Vagina (tissue), 2 donors: ENCODE measurements at regions of chr13 and their contacts with region 1.

Region 1: GRCh38 chr13:39119422-39119821 is 81.2 kb downstream of the NHLRC3 start:
- DNase-seq: no peak
- H3K4me3 ChIP-seq: no peak overlapping the region
- H3K27ac ChIP-seq: no peak overlapping the region
- H3K4me1 ChIP-seq: no peaks in the 10 kb centered on the region
- H3K27me3 ChIP-seq: no peaks in the 10 kb centered on the region
- CTCF ChIP-seq: no peak
- POLR2A ChIP-seq: no peak

Region 2: GRCh38 chr13:39185326-39185725 is 65.9 kb after region 1 on chr13:
- intact Hi-C with region 1: no loop called
- DNase-seq: no peak
- H3K4me3 ChIP-seq: no peak overlapping the region
- H3K27ac ChIP-seq: peak overlapping the region; percentile 28
- H3K4me1 ChIP-seq: peaks cover 31% of the 10 kb centered on the region
- H3K27me3 ChIP-seq: no peaks in the 10 kb centered on the region
- CTCF ChIP-seq: no peak
- POLR2A ChIP-seq: no peak

Region 3: GRCh38 chr13:39347926-39348901 is 228.8 kb after region 1 on chr13:
- intact Hi-C with region 1: no loop called
- DNase-seq: no peak
- H3K4me3 ChIP-seq: no peak overlapping the region
- H3K27ac ChIP-seq: no peak overlapping the region
- H3K4me1 ChIP-seq: peaks cover 16% of the 10 kb centered on the region
- H3K27me3 ChIP-seq: no peaks in the 10 kb centered on the region
- CTCF ChIP-seq: no peak
- POLR2A ChIP-seq: no peak

Region 4: GRCh38 chr13:40158218-40158617 is 1038.8 kb after region 1 on chr13:
- intact Hi-C with region 1: loop called (anchors 5 kb)
- DNase-seq: no peak
- H3K4me3 ChIP-seq: no peak overlapping the region
- H3K27ac ChIP-seq: no peak overlapping the region
- H3K4me1 ChIP-seq: no peaks in the 10 kb centered on the region
- H3K27me3 ChIP-seq: no peaks in the 10 kb centered on the region
- CTCF ChIP-seq: no peak
- POLR2A ChIP-seq: no peak